A549 (cell line): ENCODE measurements at regions of chr16 and their contacts with region 1.

Region 1: DNA sequence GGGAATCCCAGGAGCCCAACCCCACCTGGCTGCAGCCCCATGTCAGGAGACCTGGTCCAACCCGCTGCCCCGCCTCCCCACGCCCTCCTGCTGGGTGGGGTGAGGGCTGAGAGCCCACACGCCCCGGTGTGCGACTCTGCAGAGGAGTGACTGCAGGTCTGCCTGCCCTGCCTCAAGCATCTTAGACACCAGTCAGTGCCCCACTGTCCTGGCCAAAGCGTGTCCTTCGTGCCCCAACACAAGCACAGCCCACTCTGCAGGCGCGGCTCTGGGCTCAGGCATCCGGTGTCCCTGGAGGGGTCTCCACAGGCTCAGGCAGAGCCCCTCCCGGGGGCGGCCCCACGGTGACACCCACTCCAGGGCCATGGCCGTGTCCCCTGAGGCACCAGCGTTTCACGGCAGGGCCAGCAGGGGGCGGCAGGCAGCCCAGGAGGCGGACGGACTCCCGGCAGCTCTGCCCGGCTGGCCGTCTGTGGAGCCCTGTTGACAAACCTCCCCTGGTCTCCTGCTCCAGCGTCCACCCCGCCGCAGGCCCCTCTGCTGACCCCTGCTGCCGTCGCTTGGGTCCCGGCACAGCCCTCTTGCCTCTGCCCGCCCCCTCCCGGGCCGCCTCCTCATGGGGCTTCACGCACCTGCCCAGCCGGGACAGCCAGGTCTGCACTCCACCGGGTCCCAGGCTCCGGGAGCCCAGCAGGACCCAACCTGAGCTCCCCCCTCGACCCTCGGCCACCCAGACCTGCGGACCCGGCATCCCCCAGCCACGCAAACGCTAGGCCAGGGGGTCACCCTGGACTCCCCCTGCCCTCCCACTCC is 8.6 kb upstream of the UBE2I start:
- DNase-seq: peak; percentile 63 to 88
- ATAC-seq: peak; percentile 87 to 94
- H3K4me3 ChIP-seq: peak overlapping the region; percentile 27; the same call in 1 of the 3 replicates
- H3K27ac ChIP-seq: peak overlapping the region; percentile 58 to 89; a peak in 5 of 6 replicates
- H3K4me1 ChIP-seq: peaks cover 28% of the 10 kb centered on the region
- CTCF ChIP-seq: peak; percentile 78
- EP300 ChIP-seq: no peak
- POLR2A ChIP-seq: no peak
- RAD21 ChIP-seq: peak; percentile 38 to 51; a peak in 3 of 5 replicates

Region 2: DNA sequence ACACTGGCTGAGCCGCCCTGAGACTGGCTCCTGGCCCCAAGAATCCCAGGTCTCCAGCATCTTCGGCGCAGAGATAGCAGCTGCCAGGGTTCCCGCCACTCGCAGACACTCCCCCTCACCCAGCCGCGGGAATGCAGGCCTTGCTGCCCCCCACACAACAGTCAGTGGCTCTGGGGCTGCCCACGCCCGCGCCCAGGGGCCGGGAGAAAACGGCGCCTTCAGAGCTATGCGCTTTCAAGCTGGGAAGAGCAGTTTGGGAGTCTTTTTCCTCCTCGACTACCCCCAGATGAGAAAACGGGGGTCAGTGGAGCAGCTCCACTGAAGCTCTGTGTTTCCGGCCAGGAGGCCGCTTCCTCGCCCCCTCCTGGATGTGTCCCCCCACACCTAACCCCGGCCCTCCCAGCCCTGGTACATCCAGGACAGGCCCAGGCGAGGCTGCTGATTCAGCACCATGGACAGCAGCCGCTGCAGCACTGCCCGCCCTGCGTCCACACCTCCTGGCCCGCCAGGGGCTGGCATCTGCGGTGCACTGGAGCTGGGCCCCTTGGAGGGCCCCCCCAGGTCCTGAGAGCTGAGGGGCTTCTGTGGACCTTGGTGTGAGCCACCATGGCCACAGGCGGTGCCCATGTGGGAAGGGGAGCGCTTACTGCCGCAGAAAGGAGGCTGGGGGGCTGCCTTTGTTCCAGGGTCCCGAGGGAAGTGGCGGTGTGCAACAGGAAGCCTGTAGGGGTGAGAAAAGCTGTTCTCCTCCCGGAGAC is 112.3 kb before region 1 on chr16:
- CTCF ChIA-PET with region 1: no interaction called
- POLR2A ChIA-PET with region 1: no interaction called
- DNase-seq: no peak
- ATAC-seq: peak; percentile 37 to 64; a peak in 4 of 6 replicates
- H3K4me3 ChIP-seq: no peak overlapping the region
- H3K27ac ChIP-seq: no peak overlapping the region
- H3K4me1 ChIP-seq: peaks cover 27% of the 10 kb centered on the region
- CTCF ChIP-seq: no peak
- EP300 ChIP-seq: no peak
- POLR2A ChIP-seq: no peak
- RAD21 ChIP-seq: no peak

Region 3: DNA sequence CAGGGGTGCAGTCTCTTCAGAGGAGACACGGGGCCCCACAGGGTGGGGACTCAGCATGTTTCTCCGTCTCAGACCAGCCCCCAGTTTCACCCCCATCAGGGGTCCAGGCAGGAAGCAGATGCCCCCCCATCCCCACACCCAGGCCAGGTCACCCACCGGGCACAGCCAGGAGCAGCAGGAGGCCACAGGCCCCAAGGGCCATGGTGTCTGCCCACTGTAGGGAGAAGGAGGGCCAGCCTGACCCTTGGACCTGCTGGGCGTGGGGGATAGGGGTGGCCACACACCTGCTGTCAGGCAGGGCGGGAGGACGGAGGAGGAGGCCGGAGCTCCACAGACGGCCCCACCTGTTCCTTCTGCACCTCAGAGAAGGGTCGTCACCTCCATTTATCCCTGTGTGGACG is 75.8 kb before region 1 on chr16 and contains the start of gene TPSG1:
- CTCF ChIA-PET with region 1: no interaction called
- POLR2A ChIA-PET with region 1: no interaction called
- DNase-seq: no peak
- ATAC-seq: peak in 1 of 2 experiments; percentile 12; a peak in 2 of 6 replicates
- H3K4me3 ChIP-seq: no peak within 1 kb of the TSS
- H3K27ac ChIP-seq: peak within 1 kb of the TSS; percentile 45 to 77; a peak in 4 of 6 replicates
- H3K4me1 ChIP-seq: peaks cover 20% of the 10 kb centered on the region
- CTCF ChIP-seq: no peak
- EP300 ChIP-seq: no peak
- POLR2A ChIP-seq: no peak
- RAD21 ChIP-seq: no peak
- polyA plus RNA-seq, gene TPSG1: not detected in 2 replicates

Region 4: GRCh38 chr16:1272574-1273113 is 28.2 kb before region 1 on chr16:
- CTCF ChIA-PET with region 1: no interaction called
- POLR2A ChIA-PET with region 1: no interaction called
- DNase-seq: no peak
- ATAC-seq: peak in 1 of 2 experiments; percentile 33; a peak in 3 of 6 replicates
- H3K4me3 ChIP-seq: no peak overlapping the region
- H3K27ac ChIP-seq: no peak overlapping the region
- H3K4me1 ChIP-seq: peaks cover 5% of the 10 kb centered on the region; the same call in 1 of the 3 replicates
- CTCF ChIP-seq: no peak
- EP300 ChIP-seq: no peak
- POLR2A ChIP-seq: no peak
- RAD21 ChIP-seq: no peak

Region 5: GRCh38 chr16:1288611-1289474 is 12.0 kb before region 1 on chr16:
- CTCF ChIA-PET with region 1: interaction called, 20 read pairs
- POLR2A ChIA-PET with region 1: no interaction called
- DNase-seq: no peak
- ATAC-seq: no peak
- H3K4me3 ChIP-seq: no peak overlapping the region
- H3K27ac ChIP-seq: no peak overlapping the region
- H3K4me1 ChIP-seq: peaks cover 8% of the 10 kb centered on the region; the same call in 1 of the 3 replicates
- CTCF ChIP-seq: no peak
- EP300 ChIP-seq: no peak
- POLR2A ChIP-seq: no peak
- RAD21 ChIP-seq: no peak

Region 6: GRCh38 chr16:1317479-1318267 is 16.8 kb after region 1 on chr16:
- CTCF ChIA-PET with region 1: interaction called, 22 read pairs
- POLR2A ChIA-PET with region 1: no interaction called
- DNase-seq: no peak
- ATAC-seq: no peak
- H3K4me3 ChIP-seq: no peak overlapping the region
- H3K27ac ChIP-seq: no peak overlapping the region
- H3K4me1 ChIP-seq: no peaks in the 10 kb centered on the region; the same call in 2 of the 3 replicates
- CTCF ChIP-seq: no peak
- EP300 ChIP-seq: no peak
- POLR2A ChIP-seq: no peak
- RAD21 ChIP-seq: no peak

Region 7: GRCh38 chr16:1325673-1326371 is 25.0 kb after region 1 on chr16:
- CTCF ChIA-PET with region 1: interaction called, 16 read pairs
- POLR2A ChIA-PET with region 1: no interaction called
- DNase-seq: no peak
- ATAC-seq: peak; percentile 23 to 31; a peak in 5 of 6 replicates
- H3K4me3 ChIP-seq: no peak overlapping the region
- H3K27ac ChIP-seq: 0 out of 6 replicates have a peak overlapping the region, but pooled peaks of 1 of the 2 experiments have one; percentile 15
- H3K4me1 ChIP-seq: no peaks in the 10 kb centered on the region
- CTCF ChIP-seq: no peak
- EP300 ChIP-seq: no peak
- POLR2A ChIP-seq: no peak
- RAD21 ChIP-seq: no peak

Region 8: GRCh38 chr16:1331712-1332617 is 31.1 kb after region 1 on chr16:
- CTCF ChIA-PET with region 1: interaction called, 16 read pairs
- POLR2A ChIA-PET with region 1: no interaction called
- DNase-seq: peak; percentile 82 to 94
- ATAC-seq: peak; percentile 30 to 60
- H3K4me3 ChIP-seq: no peak overlapping the region
- H3K27ac ChIP-seq: peak overlapping the region; percentile 47 to 74; a peak in 5 of 6 replicates
- H3K4me1 ChIP-seq: peaks cover 29% of the 10 kb centered on the region
- CTCF ChIP-seq: no peak
- EP300 ChIP-seq: no peak
- POLR2A ChIP-seq: no peak
- RAD21 ChIP-seq: no peak

Region 9: GRCh38 chr16:1342526-1343427 is 41.9 kb after region 1 on chr16:
- CTCF ChIA-PET with region 1: interaction called, 18 read pairs
- POLR2A ChIA-PET with region 1: interaction called, 3 read pairs
- DNase-seq: peak; percentile 99 to 100
- ATAC-seq: peak; percentile 68 to 94
- H3K4me3 ChIP-seq: peak overlapping the region; percentile 20; the same call in 1 of the 3 replicates
- H3K27ac ChIP-seq: no peak overlapping the region
- H3K4me1 ChIP-seq: peaks cover 14% of the 10 kb centered on the region
- CTCF ChIP-seq: no peak
- EP300 ChIP-seq: no peak
- POLR2A ChIP-seq: no peak
- RAD21 ChIP-seq: no peak

Region 10: GRCh38 chr16:1363501-1364041 is 62.7 kb after region 1 on chr16:
- CTCF ChIA-PET with region 1: interaction called, 13 read pairs
- POLR2A ChIA-PET with region 1: no interaction called
- DNase-seq: peak; percentile 67 to 76
- ATAC-seq: peak; percentile 82 to 88
- H3K4me3 ChIP-seq: no peak overlapping the region
- H3K27ac ChIP-seq: 0 out of 6 replicates have a peak overlapping the region, but pooled peaks of 1 of the 2 experiments have one; percentile 0
- H3K4me1 ChIP-seq: peaks cover 3% of the 10 kb centered on the region
- CTCF ChIP-seq: peak; percentile 83
- EP300 ChIP-seq: no peak
- POLR2A ChIP-seq: no peak
- RAD21 ChIP-seq: peak; percentile 45 to 60